Right cardiac atrium (tissue), 5 donors: ENCODE measurements at regions of chr4 and their contacts with region 1.

Region 1: GRCh38 chr4:52983563-52984303 is 121.6 kb downstream of the RASL11B start:
- DNase-seq: no peak
- ATAC-seq: peak; percentile 68 to 75
- H3K4me3 ChIP-seq: no peak overlapping the region
- H3K27ac ChIP-seq: no peak overlapping the region
- H3K4me1 ChIP-seq: no peaks in the 10 kb centered on the region
- H3K27me3 ChIP-seq: no peaks in the 10 kb centered on the region

Region 2: GRCh38 chr4:52244848-52245247 is 738.9 kb before region 1 on chr4:
- intact Hi-C with region 1: loop called in 1 of 4 experiments (anchors 10 kb)
- DNase-seq: no peak
- ATAC-seq: peak; percentile 75 to 92
- H3K4me3 ChIP-seq: no peak overlapping the region
- H3K27ac ChIP-seq: no peak overlapping the region
- H3K4me1 ChIP-seq: no peaks in the 10 kb centered on the region
- H3K27me3 ChIP-seq: no peaks in the 10 kb centered on the region

Region 3: GRCh38 chr4:52529983-52530382 is 453.8 kb before region 1 on chr4:
- intact Hi-C with region 1: loop called in 1 of 4 experiments (anchors 10 kb)
- DNase-seq: no peak
- ATAC-seq: no peak
- H3K4me3 ChIP-seq: no peak overlapping the region
- H3K27ac ChIP-seq: no peak overlapping the region
- H3K4me1 ChIP-seq: no peaks in the 10 kb centered on the region
- H3K27me3 ChIP-seq: no peaks in the 10 kb centered on the region

Region 4: GRCh38 chr4:52712172-52712990 is 271.4 kb before region 1 on chr4:
- intact Hi-C with region 1: loop called in 1 of 4 experiments (anchors 10 kb)
- DNase-seq: peak; percentile 99 to 100 (median 99)
- ATAC-seq: peak; percentile 100
- H3K4me3 ChIP-seq: peak overlapping the region; percentile 93
- H3K27ac ChIP-seq: peak overlapping the region; percentile 98
- H3K4me1 ChIP-seq: peaks cover 4% of the 10 kb centered on the region
- H3K27me3 ChIP-seq: no peaks in the 10 kb centered on the region

Region 5: GRCh38 chr4:52853351-52853750 is 130.4 kb before region 1 on chr4:
- intact Hi-C with region 1: loop called in 1 of 4 experiments (anchors 10 kb)
- DNase-seq: no peak
- ATAC-seq: peak; percentile 54 to 62
- H3K4me3 ChIP-seq: no peak overlapping the region
- H3K27ac ChIP-seq: no peak overlapping the region
- H3K4me1 ChIP-seq: peaks cover 2% of the 10 kb centered on the region
- H3K27me3 ChIP-seq: no peaks in the 10 kb centered on the region

Region 6: GRCh38 chr4:53233114-53233795 is 249.5 kb after region 1 on chr4:
- intact Hi-C with region 1: no loop called
- DNase-seq: no peak
- ATAC-seq: no peak
- H3K4me3 ChIP-seq: no peak overlapping the region
- H3K27ac ChIP-seq: no peak overlapping the region
- H3K4me1 ChIP-seq: no peaks in the 10 kb centered on the region
- H3K27me3 ChIP-seq: no peaks in the 10 kb centered on the region